ENCODE measurements at regions of chr1 and their contacts with region 1.

Region 1: GRCh38 chr1:26799479-26800142 is 11.9 kb downstream of the PIGV start:
- DNase-seq: peak; percentile 40
- H3K4me3 ChIP-seq: no peak overlapping the region
- H3K27ac ChIP-seq: peak overlapping the region; percentile 37
- H3K4me1 ChIP-seq: peaks cover 12% of the 10 kb centered on the region
- H3K27me3 ChIP-seq: no peaks in the 10 kb centered on the region
- CTCF ChIP-seq: no peak

Region 2: GRCh38 chr1:26399034-26399433 is 400.6 kb before region 1 on chr1:
- CTCF ChIA-PET with region 1: no interaction called
- POLR2A ChIA-PET with region 1: no interaction called
- intact Hi-C with region 1: no loop called
- DNase-seq: no peak
- H3K4me3 ChIP-seq: no peak overlapping the region
- H3K27ac ChIP-seq: no peak overlapping the region
- H3K4me1 ChIP-seq: no peaks in the 10 kb centered on the region
- H3K27me3 ChIP-seq: peaks cover 19% of the 10 kb centered on the region
- CTCF ChIP-seq: no peak

Region 3: GRCh38 chr1:26472901-26473845 is 326.4 kb before region 1 on chr1:
- CTCF ChIA-PET with region 1: no interaction called
- POLR2A ChIA-PET with region 1: no interaction called
- intact Hi-C with region 1: no loop called
- DNase-seq: peak; percentile 93
- H3K4me3 ChIP-seq: peak overlapping the region; percentile 74
- H3K27ac ChIP-seq: peak overlapping the region; percentile 100
- H3K4me1 ChIP-seq: peaks cover 45% of the 10 kb centered on the region
- H3K27me3 ChIP-seq: no peaks in the 10 kb centered on the region
- CTCF ChIP-seq: no peak

Region 4: GRCh38 chr1:26555550-26556510 is 243.8 kb before region 1 on chr1:
- CTCF ChIA-PET with region 1: no interaction called
- POLR2A ChIA-PET with region 1: interaction called, 10 read pairs
- intact Hi-C with region 1: no loop called
- DNase-seq: no peak
- H3K4me3 ChIP-seq: no peak overlapping the region
- H3K27ac ChIP-seq: no peak overlapping the region
- H3K4me1 ChIP-seq: no peaks in the 10 kb centered on the region
- H3K27me3 ChIP-seq: no peaks in the 10 kb centered on the region
- CTCF ChIP-seq: no peak

Region 5: DNA sequence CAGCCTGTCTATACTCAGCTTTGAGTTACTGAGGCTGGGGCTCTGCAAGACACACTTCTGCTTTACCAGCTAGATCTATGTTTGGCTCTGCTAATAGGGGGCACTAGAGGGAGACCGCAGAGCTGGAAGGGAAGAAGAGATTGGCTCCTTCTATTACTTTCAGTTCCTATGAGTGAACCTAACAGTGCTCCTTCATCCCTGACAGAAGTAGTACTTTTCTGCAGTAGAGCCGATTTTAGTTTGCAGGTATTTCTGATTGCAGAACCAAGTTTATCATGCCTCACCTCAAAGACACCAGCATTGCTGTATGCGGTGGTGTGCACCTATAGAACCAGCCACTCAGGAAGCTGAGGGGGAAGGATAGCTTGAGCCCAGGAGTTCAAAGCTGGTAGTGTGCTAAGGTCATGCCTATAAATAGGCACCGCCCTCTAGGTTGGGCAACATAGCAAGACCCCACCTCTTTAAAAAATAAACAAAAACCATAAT is 21.2 kb after region 1 on chr1:
- CTCF ChIA-PET with region 1: interaction called, 10 read pairs
- POLR2A ChIA-PET with region 1: no interaction called
- intact Hi-C with region 1: no loop called
- DNase-seq: peak; percentile 21
- H3K4me3 ChIP-seq: no peak overlapping the region
- H3K27ac ChIP-seq: no peak overlapping the region
- H3K4me1 ChIP-seq: no peaks in the 10 kb centered on the region
- H3K27me3 ChIP-seq: no peaks in the 10 kb centered on the region
- CTCF ChIP-seq: peak; percentile 30; the same call in 1 of the 2 replicates

Region 6: GRCh38 chr1:26889551-26890466 is 90.2 kb after region 1 on chr1 and contains the start of gene GPN2:
- CTCF ChIA-PET with region 1: no interaction called
- POLR2A ChIA-PET with region 1: interaction called, 18 read pairs
- intact Hi-C with region 1: no loop called
- DNase-seq: peak; percentile 88
- H3K4me3 ChIP-seq: peak within 1 kb of the TSS; percentile 70
- H3K27ac ChIP-seq: peak within 1 kb of the TSS; percentile 84
- H3K4me1 ChIP-seq: peaks cover 9% of the 10 kb centered on the region
- H3K27me3 ChIP-seq: no peaks in the 10 kb centered on the region
- CTCF ChIP-seq: no peak
- total RNA-seq, gene GPN2: 40.8 and 41.4 TPM in 2 replicates

Region 7: GRCh38 chr1:27405074-27405473 is 605.5 kb after region 1 on chr1:
- CTCF ChIA-PET with region 1: no interaction called
- POLR2A ChIA-PET with region 1: no interaction called
- intact Hi-C with region 1: no loop called
- DNase-seq: no peak
- H3K4me3 ChIP-seq: no peak overlapping the region
- H3K27ac ChIP-seq: no peak overlapping the region
- H3K4me1 ChIP-seq: no peaks in the 10 kb centered on the region
- H3K27me3 ChIP-seq: no peaks in the 10 kb centered on the region
- CTCF ChIP-seq: no peak

Region 8: DNA sequence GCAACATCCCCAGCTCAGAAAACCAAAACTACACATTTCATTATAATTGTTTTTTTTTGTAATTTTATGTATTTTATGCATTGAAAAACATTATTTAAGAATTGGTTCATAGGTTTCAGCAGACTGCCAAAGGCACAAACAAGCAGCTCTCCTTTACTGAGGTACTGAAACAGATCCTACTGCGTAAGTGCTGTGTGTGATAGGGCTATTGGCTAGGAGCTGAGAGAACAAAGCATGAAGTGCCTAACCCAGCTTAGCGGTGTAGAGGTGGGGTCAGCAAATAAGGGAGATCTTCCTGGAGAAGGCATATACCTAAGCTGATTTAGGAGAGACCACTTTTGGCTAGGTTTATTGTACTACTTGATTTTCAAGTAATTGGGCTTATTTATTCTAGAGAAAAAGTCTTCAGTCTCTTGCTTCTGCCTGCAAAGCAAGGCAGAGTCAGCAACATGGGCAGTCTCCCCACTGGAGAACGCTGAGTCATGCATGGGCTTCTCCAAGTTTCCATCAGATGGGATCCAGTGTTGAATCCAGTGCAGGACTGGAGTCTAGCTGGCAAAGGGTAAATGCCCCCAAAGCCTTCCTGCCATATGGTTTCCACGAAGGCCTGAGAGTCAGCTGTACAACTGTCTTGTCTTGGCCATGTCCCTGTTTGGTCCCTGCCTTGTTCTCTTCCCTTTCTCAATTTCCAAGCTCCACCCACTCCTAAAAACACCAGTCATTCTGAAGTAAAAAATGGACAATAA is 1919.1 kb after region 1 on chr1:
- CTCF ChIA-PET with region 1: no interaction called
- POLR2A ChIA-PET with region 1: interaction called, 18 read pairs
- intact Hi-C with region 1: no loop called
- DNase-seq: peak; percentile 14
- H3K4me3 ChIP-seq: no peak overlapping the region
- H3K27ac ChIP-seq: peak overlapping the region; percentile 60
- H3K4me1 ChIP-seq: peaks cover 6% of the 10 kb centered on the region
- H3K27me3 ChIP-seq: no peaks in the 10 kb centered on the region
- CTCF ChIP-seq: no peak

Measured in A673 (cell line).